ENCODE measurements at regions of chr6 and their contacts with region 1.

Region 1: GRCh38 chr6:26520853-26521599 is 17.1 kb upstream of the HMGN4 start:
- DNase-seq: peak; percentile 94
- ATAC-seq: peak; percentile 64
- H3K4me3 ChIP-seq: peak overlapping the region; percentile 60 to 95 (median 74)
- H3K4me3 Mint-ChIP-seq: peak overlapping the region; percentile 84
- H3K27ac ChIP-seq: peak overlapping the region; percentile 85 to 94
- H3K27ac Mint-ChIP-seq: peak overlapping the region; percentile 91
- H3K4me1 ChIP-seq: peaks cover 17 to 20% of the 10 kb centered on the region in 2 donors
- H3K4me1 Mint-ChIP-seq: peaks cover 33% of the 10 kb centered on the region
- H3K27me3 ChIP-seq: no peaks in the 10 kb centered on the region
- H3K27me3 Mint-ChIP-seq: no peaks in the 10 kb centered on the region
- CTCF ChIP-seq: no peak

Region 2: GRCh38 chr6:26457806-26458688 is 63.0 kb before region 1 on chr6 and contains the start of gene BTN2A1:
- CTCF ChIA-PET with region 1: no interaction called
- POLR2A ChIA-PET with region 1: no interaction called
- intact Hi-C with region 1: loop called (anchors 5 kb)
- DNase-seq: peak; percentile 89
- ATAC-seq: peak; percentile 96
- H3K4me3 ChIP-seq: peak within 1 kb of the TSS; percentile 75 to 96 (median 92)
- H3K4me3 Mint-ChIP-seq: peak within 1 kb of the TSS; percentile 100
- H3K27ac ChIP-seq: peak within 1 kb of the TSS; percentile 77 to 89
- H3K27ac Mint-ChIP-seq: peak within 1 kb of the TSS; percentile 98
- H3K4me1 ChIP-seq: peaks cover 30 to 47% of the 10 kb centered on the region in 2 donors
- H3K4me1 Mint-ChIP-seq: peaks cover 72% of the 10 kb centered on the region
- H3K27me3 ChIP-seq: no peaks in the 10 kb centered on the region
- H3K27me3 Mint-ChIP-seq: no peaks in the 10 kb centered on the region
- CTCF ChIP-seq: no peak
- total RNA-seq, gene BTN2A1: 63.3 and 69.6 TPM in 2 replicates

Region 3: GRCh38 chr6:26501482-26501986 is 19.5 kb before region 1 on chr6:
- CTCF ChIA-PET with region 1: interaction called, 3 read pairs
- POLR2A ChIA-PET with region 1: interaction called, 3 read pairs
- intact Hi-C with region 1: loop called (anchors 2 kb)
- DNase-seq: peak; percentile 65
- ATAC-seq: peak; percentile 66
- H3K4me3 ChIP-seq: peak overlapping the region; percentile 8 to 65 (median 56)
- H3K4me3 Mint-ChIP-seq: peak overlapping the region; percentile 90
- H3K27ac ChIP-seq: no peak overlapping the region
- H3K27ac Mint-ChIP-seq: peak overlapping the region; percentile 37
- H3K4me1 ChIP-seq: peaks cover 26 to 27% of the 10 kb centered on the region in 2 donors
- H3K4me1 Mint-ChIP-seq: peaks cover 27% of the 10 kb centered on the region
- H3K27me3 ChIP-seq: peaks cover 0 to 6% (median 0%) of the 10 kb centered on the region in 4 experiments
- H3K27me3 Mint-ChIP-seq: no peaks in the 10 kb centered on the region
- CTCF ChIP-seq: no peak

Region 4: GRCh38 chr6:26532699-26533531 is 11.9 kb after region 1 on chr6:
- CTCF ChIA-PET with region 1: interaction called, 27 read pairs
- POLR2A ChIA-PET with region 1: interaction called, 51 read pairs
- intact Hi-C with region 1: loop called (anchors 1 kb)
- DNase-seq: peak; percentile 95
- ATAC-seq: peak; percentile 26
- H3K4me3 ChIP-seq: peak overlapping the region; percentile 56 to 86 (median 78)
- H3K4me3 Mint-ChIP-seq: peak overlapping the region; percentile 99
- H3K27ac ChIP-seq: peak overlapping the region; percentile 45 to 78
- H3K27ac Mint-ChIP-seq: peak overlapping the region; percentile 97
- H3K4me1 ChIP-seq: peaks cover 23 to 27% of the 10 kb centered on the region in 2 donors
- H3K4me1 Mint-ChIP-seq: peaks cover 48% of the 10 kb centered on the region
- H3K27me3 ChIP-seq: no peaks in the 10 kb centered on the region
- H3K27me3 Mint-ChIP-seq: peaks cover 3% of the 10 kb centered on the region
- CTCF ChIP-seq: no peak

Measured in B cell (primary cell).